Activated T-helper 2 cell treated with anti-CD3 and anti-CD28 coated beads, Interferon-gamma antibody, Interleukin-2, Interleukin-4, amounts not matched to agents 10 μg/mL and 5 μg/mL and 100 μg/mL, durations not matched to agents 14 hours and 24 hours and 36 hours (primary cell): ENCODE measurements at regions of chr21 and their contacts with region 1.

Region 1: GRCh38 chr21:17201741-17202260 is 311.0 kb upstream of the CXADR start:
- DNase-seq: no peak
- H3K4me3 Mint-ChIP-seq: no peak overlapping the region
- H3K27ac Mint-ChIP-seq: no peak overlapping the region
- H3K4me1 Mint-ChIP-seq: no peaks in the 10 kb centered on the region
- H3K27me3 Mint-ChIP-seq: no peaks in the 10 kb centered on the region

Region 2: GRCh38 chr21:17105953-17106352 is 95.8 kb before region 1 on chr21:
- intact Hi-C with region 1: no loop called
- DNase-seq: no peak
- H3K4me3 Mint-ChIP-seq: no peak overlapping the region
- H3K27ac Mint-ChIP-seq: no peak overlapping the region
- H3K4me1 Mint-ChIP-seq: no peaks in the 10 kb centered on the region
- H3K27me3 Mint-ChIP-seq: no peaks in the 10 kb centered on the region

Region 3: DNA sequence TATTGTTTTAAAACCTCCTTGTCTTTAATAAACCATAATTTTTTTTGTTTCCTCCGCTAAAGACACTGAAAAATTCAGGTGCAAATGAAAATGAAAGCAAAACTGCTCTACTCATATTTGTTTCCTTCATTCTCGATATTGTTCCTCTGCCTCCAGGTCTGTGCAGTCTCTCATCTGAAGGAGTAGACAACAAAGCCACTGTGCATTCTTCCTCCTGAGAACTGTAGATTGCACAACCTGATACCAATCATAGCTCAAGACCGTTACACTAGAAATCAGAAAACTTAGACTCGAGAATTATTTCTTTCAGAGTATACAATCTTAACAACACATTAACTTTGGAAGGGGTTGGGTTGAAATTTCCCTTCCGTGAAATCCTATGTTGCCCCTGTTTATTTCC is 62.1 kb before region 1 on chr21:
- intact Hi-C with region 1: loop called (anchors 10 kb)
- DNase-seq: no peak
- H3K4me3 Mint-ChIP-seq: peak overlapping the region; percentile 65
- H3K27ac Mint-ChIP-seq: no peak overlapping the region
- H3K4me1 Mint-ChIP-seq: peaks cover 2% of the 10 kb centered on the region
- H3K27me3 Mint-ChIP-seq: no peaks in the 10 kb centered on the region

Region 4: DNA sequence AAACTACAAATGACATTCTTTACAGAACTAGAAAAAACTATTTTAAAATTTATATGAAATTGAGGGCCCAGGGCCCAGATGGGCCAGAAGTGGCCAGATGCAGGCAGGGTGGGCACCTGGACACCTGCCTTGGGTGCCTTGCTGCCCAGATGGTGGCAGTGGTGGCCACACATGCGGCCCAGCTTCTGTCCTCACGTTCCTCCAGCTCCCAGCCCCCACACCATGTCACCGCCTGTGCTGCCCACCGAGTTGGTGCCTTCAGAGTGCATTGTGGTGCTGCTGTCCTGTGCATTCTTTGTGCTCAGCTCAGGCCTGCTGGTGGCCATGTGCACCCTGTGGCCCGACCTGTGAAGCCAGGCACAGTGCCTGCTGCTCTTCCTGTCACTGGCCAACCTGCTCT is 94.2 kb after region 1 on chr21:
- intact Hi-C with region 1: no loop called
- DNase-seq: no peak
- H3K4me3 Mint-ChIP-seq: no peak overlapping the region
- H3K27ac Mint-ChIP-seq: no peak overlapping the region
- H3K4me1 Mint-ChIP-seq: no peaks in the 10 kb centered on the region
- H3K27me3 Mint-ChIP-seq: no peaks in the 10 kb centered on the region